ENCODE measurements at regions of chr11 and their contacts with region 1.

Region 1: DNA sequence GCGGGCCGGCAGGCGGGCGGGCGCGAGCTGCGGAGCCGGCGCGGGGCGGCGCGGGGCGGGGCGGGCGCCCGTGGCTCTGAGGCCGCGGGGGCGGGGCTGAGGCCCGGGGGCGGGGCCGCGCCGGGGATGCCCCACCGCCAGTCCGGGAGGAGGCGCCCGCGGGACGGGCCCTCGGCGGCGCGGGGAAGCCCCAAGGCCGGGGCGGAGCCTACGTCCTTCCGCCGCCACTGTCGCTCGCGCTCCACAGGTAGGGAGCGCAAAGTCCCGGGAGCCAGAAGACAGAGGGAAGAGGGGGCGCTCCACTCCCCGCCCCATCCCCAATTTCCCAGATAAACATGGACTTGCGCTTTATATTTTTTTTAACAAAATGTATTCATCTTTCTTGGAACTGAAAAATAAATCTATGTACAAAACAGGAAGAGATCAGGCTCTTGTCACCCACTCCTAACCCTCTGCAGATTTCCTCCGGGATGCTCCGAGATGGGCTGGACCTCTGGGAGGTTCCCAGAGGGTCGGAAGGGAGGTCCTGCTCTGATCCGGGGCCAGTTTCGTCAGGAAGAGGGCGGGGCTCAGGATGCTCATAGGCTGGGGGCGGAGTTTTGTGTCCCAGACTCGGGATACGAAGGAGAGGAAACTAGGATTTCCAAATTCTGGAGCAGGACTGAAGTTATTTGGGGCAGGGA is at the start of gene MAP4K2:
- DNase-seq: peak; percentile 80 to 96 (median 87)
- ATAC-seq: peak; percentile 98
- H3K4me3 ChIP-seq: peak within 1 kb of the TSS; percentile 91
- H3K4me3 Mint-ChIP-seq: peak within 1 kb of the TSS; percentile 85 to 92 (median 88)
- H3K27ac ChIP-seq: peak within 1 kb of the TSS; percentile 98
- H3K27ac Mint-ChIP-seq: peak within 1 kb of the TSS; percentile 82 to 97 (median 95)
- H3K4me1 ChIP-seq: peaks cover 9 to 23% of the 10 kb centered on the region in 2 donors
- H3K4me1 Mint-ChIP-seq: peaks cover 27 to 43% (median 32%) of the 10 kb centered on the region in 7 donors
- H3K27me3 ChIP-seq: no peaks in the 10 kb centered on the region
- H3K27me3 Mint-ChIP-seq: no peaks in the 10 kb centered on the region
- total RNA-seq, gene MAP4K2: 75.2 to 130 (median 84.3) TPM

Region 2: GRCh38 chr11:64767344-64768299 is 35.7 kb before region 1 on chr11:
- CTCF ChIA-PET with region 1: interaction called, 4 read pairs
- POLR2A ChIA-PET with region 1: interaction called, 16 read pairs
- intact Hi-C with region 1: no loop called
- DNase-seq: peak; percentile 65 to 86 (median 78)
- ATAC-seq: peak; percentile 53
- H3K4me3 ChIP-seq: no peak overlapping the region
- H3K4me3 Mint-ChIP-seq: peak overlapping the region; percentile 51 to 96 (median 78)
- H3K27ac ChIP-seq: peak overlapping the region; percentile 69
- H3K27ac Mint-ChIP-seq: peak overlapping the region; percentile 79 to 97 (median 90)
- H3K4me1 ChIP-seq: peaks cover 54 to 84% of the 10 kb centered on the region in 2 donors
- H3K4me1 Mint-ChIP-seq: peaks cover 59 to 97% (median 88%) of the 10 kb centered on the region in 7 donors
- H3K27me3 ChIP-seq: no peaks in the 10 kb centered on the region
- H3K27me3 Mint-ChIP-seq: no peaks in the 10 kb centered on the region

Region 3: DNA sequence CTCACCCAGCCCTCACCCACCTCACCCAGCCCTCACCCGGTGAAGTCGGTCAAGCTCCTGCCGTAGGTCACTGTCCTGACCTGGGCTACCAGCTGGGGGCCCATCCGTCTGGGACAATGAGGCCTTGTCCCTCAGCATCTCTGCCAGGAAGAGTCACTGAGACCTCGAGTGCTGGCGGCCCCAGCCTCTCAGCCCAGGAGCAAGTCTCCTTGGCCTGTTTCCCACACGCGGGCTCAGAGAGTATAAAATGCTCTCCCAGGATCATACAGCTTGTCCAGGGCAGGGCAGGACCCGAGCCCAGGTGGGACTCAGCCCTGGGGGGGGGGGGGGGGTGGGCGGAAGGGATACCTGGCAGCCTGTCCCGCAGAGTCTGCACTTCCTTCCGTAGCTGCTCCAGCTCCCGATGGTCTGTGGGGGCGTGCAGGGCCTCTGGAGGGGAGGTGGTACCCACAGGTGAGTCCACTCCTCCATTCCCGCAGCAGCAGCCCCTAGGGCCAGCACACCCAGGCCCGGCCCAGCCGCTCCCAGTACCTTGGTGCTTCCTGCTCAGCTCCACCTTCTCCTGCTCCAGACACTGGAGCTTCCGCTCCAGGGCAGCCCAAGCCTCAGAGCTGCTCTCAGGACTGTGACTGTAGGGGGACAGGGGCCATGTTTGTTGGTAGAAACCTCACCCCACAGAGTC is 33.2 kb after region 1 on chr11:
- CTCF ChIA-PET with region 1: no interaction called
- POLR2A ChIA-PET with region 1: no interaction called
- intact Hi-C with region 1: no loop called
- DNase-seq: peak in 1 of 9 donors; percentile 7
- ATAC-seq: no peak
- H3K4me3 ChIP-seq: no peak overlapping the region
- H3K4me3 Mint-ChIP-seq: no peak overlapping the region
- H3K27ac ChIP-seq: no peak overlapping the region
- H3K27ac Mint-ChIP-seq: no peak overlapping the region
- H3K4me1 ChIP-seq: no peaks in the 10 kb centered on the region
- H3K4me1 Mint-ChIP-seq: no peaks in the 10 kb centered on the region
- H3K27me3 ChIP-seq: no peaks in the 10 kb centered on the region
- H3K27me3 Mint-ChIP-seq: no peaks in the 10 kb centered on the region

Measured in naive thymus-derived CD4-positive, alpha-beta T cell (primary cell).